Sciatic nerve (tissue), 2 donors: ENCODE measurements at regions of chr7 and their contacts with region 1.

Region 1: DNA sequence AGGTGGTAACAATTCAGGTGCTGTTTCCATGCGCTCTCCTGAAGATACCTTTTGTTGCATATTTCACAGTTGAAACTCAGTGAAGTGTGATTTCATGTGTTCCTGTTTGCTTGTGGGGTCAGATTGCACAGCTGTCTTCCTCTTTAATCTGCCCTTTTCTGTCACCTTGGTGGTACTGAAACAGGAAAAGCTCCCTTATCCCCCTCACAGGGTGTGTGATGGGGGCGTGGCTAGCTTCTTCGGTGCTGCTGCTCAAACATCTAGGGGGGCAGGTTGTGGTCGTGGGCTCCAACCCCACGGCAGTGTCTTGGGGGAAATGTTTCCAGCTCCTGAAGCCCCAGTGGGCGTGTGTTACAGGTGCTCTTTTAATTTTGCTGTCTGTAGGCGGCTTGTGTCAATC is 107.4 kb upstream of the KLF14 start:
- DNase-seq: no peak
- ATAC-seq: no peak

Region 2: DNA sequence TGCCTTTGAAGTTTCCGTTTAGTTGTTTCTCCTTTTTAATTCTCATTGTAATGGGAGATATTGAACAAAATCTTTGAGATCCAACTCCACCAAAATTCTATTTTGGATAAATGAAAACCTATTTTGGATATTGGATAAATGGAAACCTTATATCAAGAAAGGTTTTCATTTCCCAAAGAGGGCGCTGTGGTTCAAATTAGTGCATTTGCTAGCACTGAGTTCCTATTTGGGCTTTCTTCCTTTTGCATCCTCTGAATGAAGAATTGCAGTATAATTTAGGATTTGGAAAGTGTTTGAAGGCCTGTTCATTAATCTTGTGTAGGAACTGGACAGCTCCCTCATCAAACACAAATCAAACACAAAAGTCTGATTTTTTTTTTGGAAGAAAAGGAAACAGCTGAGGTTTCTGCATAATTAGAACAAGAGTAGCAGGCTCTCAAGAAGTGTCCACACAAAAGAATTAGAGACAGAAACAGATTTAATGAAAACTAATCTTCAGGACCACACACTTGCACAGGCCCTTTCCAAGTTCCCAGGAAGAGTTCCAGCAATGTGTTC is 26.6 kb before region 1 on chr7:
- intact Hi-C with region 1: loop called (anchors 1 kb)
- DNase-seq: no peak
- ATAC-seq: peak; percentile 30